PC-3 (cell line): ENCODE measurements at regions of chr11 and their contacts with region 1.

Region 1: GRCh38 chr11:34940026-34940677 is 23.7 kb downstream of the PDHX start:
- DNase-seq: no peak
- ATAC-seq: no peak
- H3K4me3 ChIP-seq: no peak overlapping the region
- H3K27ac ChIP-seq: no peak overlapping the region
- H3K4me1 ChIP-seq: no peaks in the 10 kb centered on the region
- H3K27me3 ChIP-seq: no peaks in the 10 kb centered on the region
- CTCF ChIP-seq: peak; percentile 39; the same call in 1 of the 2 replicates

Region 2: GRCh38 chr11:34964610-34965331 is 24.6 kb after region 1 on chr11:
- CTCF ChIA-PET with region 1: no interaction called
- POLR2A ChIA-PET with region 1: interaction called, 11 read pairs
- intact Hi-C with region 1: no loop called
- DNase-seq: no peak
- ATAC-seq: no peak
- H3K4me3 ChIP-seq: no peak overlapping the region
- H3K27ac ChIP-seq: no peak overlapping the region
- H3K4me1 ChIP-seq: no peaks in the 10 kb centered on the region
- H3K27me3 ChIP-seq: no peaks in the 10 kb centered on the region
- CTCF ChIP-seq: no peak